ENCODE measurements at regions of chr4 and their contacts with region 1.

Region 1: DNA sequence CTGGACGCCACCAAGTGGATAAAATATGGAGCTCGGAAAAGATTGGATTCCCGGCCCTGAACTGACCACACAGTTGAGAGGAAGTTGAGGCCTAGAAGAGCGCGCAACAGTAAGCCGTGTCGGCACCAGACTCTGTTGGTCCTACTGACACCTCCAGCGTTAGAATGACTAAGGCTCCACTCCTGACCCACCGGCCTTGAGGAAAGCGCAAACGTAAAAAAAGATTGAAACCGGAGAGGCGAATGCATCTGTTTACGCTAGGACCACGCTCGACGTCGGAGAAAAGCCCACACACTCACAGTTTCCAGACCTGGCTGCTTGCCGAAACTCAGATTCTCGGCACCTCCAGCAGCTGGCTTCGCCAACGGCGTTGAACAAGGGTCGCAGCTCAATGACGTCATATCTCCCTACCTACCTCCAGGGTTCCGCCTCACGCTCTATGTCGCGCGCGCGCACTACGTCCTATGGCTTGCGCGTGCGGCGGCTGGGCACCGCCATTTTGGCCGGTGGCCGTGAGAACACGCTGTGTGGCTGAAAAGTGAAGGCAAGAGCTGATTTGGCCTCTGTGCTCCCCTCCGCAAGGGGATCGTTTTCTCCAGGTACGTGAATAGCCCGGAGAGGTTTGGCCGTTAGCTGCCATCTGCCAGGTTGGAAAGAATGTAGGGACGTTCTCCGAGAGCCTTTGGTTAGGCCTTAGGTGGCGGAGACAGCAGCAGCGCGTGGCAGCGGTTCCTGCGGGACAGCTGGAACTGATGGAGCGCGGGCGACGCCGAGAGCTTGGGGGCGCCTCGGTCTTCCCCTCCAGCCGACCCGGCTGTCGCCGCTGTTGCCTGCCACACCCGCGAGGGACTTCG is at the starts of genes ABCE1 and ANAPC10:
- DNase-seq: peak; percentile 98
- H3K4me3 ChIP-seq: peak within 1 kb of the TSS; percentile 83
- CTCF ChIP-seq: peak; percentile 54

Region 2: GRCh38 chr4:144174401-144175067 is 923.5 kb before region 1 on chr4:
- in situ Hi-C with region 1: loop called (anchors 25 kb)
- DNase-seq: peak; percentile 60
- H3K4me3 ChIP-seq: no peak overlapping the region
- CTCF ChIP-seq: no peak

Region 3: DNA sequence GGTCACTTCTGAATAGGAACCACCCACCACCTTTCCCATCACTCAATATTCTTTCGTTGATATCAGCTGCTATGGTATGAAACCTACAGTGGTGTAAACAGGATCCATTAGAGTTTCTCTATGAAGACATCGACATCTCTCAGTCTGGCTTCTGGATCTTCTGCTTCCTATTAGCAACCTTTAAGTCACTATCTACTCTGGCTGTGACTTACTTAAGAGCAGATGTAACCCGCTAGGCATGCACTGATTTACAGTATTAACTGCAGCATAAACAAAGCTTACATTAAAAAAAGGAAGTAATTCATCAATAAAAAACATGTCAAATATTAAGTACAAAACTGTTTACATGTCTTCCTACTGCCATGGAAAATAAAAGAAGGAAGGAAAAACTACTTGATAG is 96.4 kb before region 1 on chr4:
- in situ Hi-C with region 1: no loop called
- DNase-seq: no peak
- H3K4me3 ChIP-seq: no peak overlapping the region
- CTCF ChIP-seq: no peak